BJ (cell line): ENCODE measurements at regions of chr6 and their contacts with region 1.

Region 1: DNA sequence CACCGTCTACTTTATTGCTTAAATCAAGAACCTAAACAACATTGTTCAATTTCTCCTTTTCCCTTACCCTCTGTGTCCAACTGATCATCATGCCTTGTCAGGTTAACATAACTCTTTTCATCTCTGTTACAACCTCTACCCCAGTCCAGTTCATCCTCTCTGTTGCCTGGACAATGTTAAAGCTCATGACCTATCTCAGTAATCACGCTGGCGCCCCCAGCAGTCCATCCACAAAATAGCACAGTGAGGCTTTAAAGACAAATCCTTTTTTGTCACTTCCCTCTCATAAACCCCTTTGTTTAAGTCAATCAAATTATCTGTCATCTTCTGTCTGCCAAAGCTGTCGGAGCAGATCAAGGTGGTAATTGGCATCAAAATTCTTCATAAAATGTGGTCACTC is 140.1 kb downstream of the QKI start:
- DNase-seq: no peak
- H3K4me3 ChIP-seq: no peak overlapping the region
- H3K27me3 ChIP-seq: no peaks in the 10 kb centered on the region
- CTCF ChIP-seq: peak; percentile 65

Region 2: GRCh38 chr6:163429858-163430448 is 124.7 kb before region 1 on chr6:
- CTCF ChIA-PET with region 1: interaction called, 12 read pairs
- POLR2A ChIA-PET with region 1: no interaction called
- DNase-seq: no peak
- H3K4me3 ChIP-seq: no peak overlapping the region
- H3K27me3 ChIP-seq: no peaks in the 10 kb centered on the region
- CTCF ChIP-seq: no peak

Region 3: GRCh38 chr6:163457637-163458561 is 96.8 kb before region 1 on chr6:
- CTCF ChIA-PET with region 1: no interaction called
- POLR2A ChIA-PET with region 1: interaction called, 11 read pairs
- DNase-seq: peak; percentile 67
- H3K4me3 ChIP-seq: no peak overlapping the region
- H3K27me3 ChIP-seq: no peaks in the 10 kb centered on the region
- CTCF ChIP-seq: no peak